Activated CD8-positive, alpha-beta memory T cell treated with anti-CD3 and anti-CD28 coated beads, Interleukin-2, amount 10 ng/mL, durations not matched to agents 7 days and 5 days (primary cell): ENCODE measurements at regions of chr12 and their contacts with region 1.

Region 1: DNA sequence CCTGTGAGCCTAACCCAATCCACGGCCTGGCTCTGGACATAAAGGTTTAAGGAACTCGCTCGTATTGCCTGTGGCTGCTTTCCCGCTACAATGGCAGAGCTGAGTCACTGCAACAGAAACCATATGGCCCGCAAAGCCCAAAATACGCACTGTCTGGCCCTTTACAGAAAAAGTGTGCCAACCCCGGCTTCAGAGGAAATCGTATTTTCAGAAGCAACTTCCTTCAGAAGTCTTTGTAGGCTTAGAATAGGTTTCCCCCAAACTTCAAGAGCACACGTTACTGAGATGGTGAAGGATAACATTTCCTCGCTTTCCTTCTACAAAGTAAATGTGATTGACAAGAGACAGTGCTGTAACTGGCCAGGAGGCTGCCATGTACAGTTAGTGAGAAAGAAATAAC is 34.8 kb upstream of the TESC start:
- DNase-seq: peak; percentile 81
- ATAC-seq: peak; percentile 87
- H3K4me3 Mint-ChIP-seq: peak overlapping the region; percentile 7
- H3K27ac Mint-ChIP-seq: peak overlapping the region; percentile 84
- H3K4me1 Mint-ChIP-seq: peaks cover 18% of the 10 kb centered on the region
- H3K27me3 Mint-ChIP-seq: no peaks in the 10 kb centered on the region

Region 2: GRCh38 chr12:117119592-117120198 is 14.4 kb before region 1 on chr12:
- CTCF ChIA-PET with region 1: interaction called, 18 read pairs
- DNase-seq: peak; percentile 51
- ATAC-seq: peak; percentile 73
- H3K4me3 Mint-ChIP-seq: no peak overlapping the region
- H3K27ac Mint-ChIP-seq: no peak overlapping the region
- H3K4me1 Mint-ChIP-seq: peaks cover 1% of the 10 kb centered on the region
- H3K27me3 Mint-ChIP-seq: no peaks in the 10 kb centered on the region

Region 3: GRCh38 chr12:117165342-117165741 is 31.3 kb after region 1 on chr12:
- CTCF ChIA-PET with region 1: no interaction called
- DNase-seq: no peak
- ATAC-seq: no peak
- H3K4me3 Mint-ChIP-seq: no peak overlapping the region
- H3K27ac Mint-ChIP-seq: no peak overlapping the region
- H3K4me1 Mint-ChIP-seq: peaks cover 3% of the 10 kb centered on the region
- H3K27me3 Mint-ChIP-seq: no peaks in the 10 kb centered on the region